GM12878 (cell line): ENCODE measurements at regions of chr11 and their contacts with region 1.

Region 1: GRCh38 chr11:96389720-96390487 is at the starts of genes CCDC82 and JRKL:
- DNase-seq: peak; percentile 78
- ATAC-seq: peak; percentile 94
- H3K4me3 ChIP-seq: peak within 1 kb of the TSS; percentile 90
- H3K27ac ChIP-seq: peak within 1 kb of the TSS; percentile 78
- H3K4me1 ChIP-seq: no peaks in the 10 kb centered on the region
- H3K27me3 ChIP-seq: no peaks in the 10 kb centered on the region
- CTCF ChIP-seq: no peak
- EP300 ChIP-seq: no peak
- POLR2A ChIP-seq: peak; percentile 92
- RAD21 ChIP-seq: no peak
- polyA plus RNA-seq, gene CCDC82: 24.5 to 24.7 TPM
- polyA plus RNA-seq, gene JRKL: 4.6 to 4.8 TPM

Region 2: GRCh38 chr11:95790123-95790932 is 599.6 kb before region 1 on chr11 and contains the start of gene CEP57:
- CTCF ChIA-PET with region 1: interaction called, 5 read pairs
- POLR2A ChIA-PET with region 1: interaction called, 11 read pairs
- RAD21 ChIA-PET with region 1: interaction called, 11 read pairs
- SMC1A ChIA-PET with region 1: interaction called, 14 read pairs
- in situ Hi-C with region 1: loop called (anchors 5 kb)
- intact Hi-C with region 1: loop called (anchors 1 kb)
- DNase-seq: peak; percentile 92
- ATAC-seq: peak; percentile 73
- H3K4me3 ChIP-seq: peak within 1 kb of the TSS; percentile 87
- H3K27ac ChIP-seq: peak within 1 kb of the TSS; percentile 90
- H3K4me1 ChIP-seq: 0 out of 2 replicates have a peak, but pooled peaks cover 3% of the 10 kb centered on the region
- H3K27me3 ChIP-seq: no peaks in the 10 kb centered on the region
- CTCF ChIP-seq: no peak
- EP300 ChIP-seq: 0 out of 4 replicates have a peak, but pooled peaks of 1 of the 2 experiments have one; percentile 40
- POLR2A ChIP-seq: peak; percentile 77
- RAD21 ChIP-seq: no peak
- polyA plus RNA-seq, gene CEP57: 19.4 to 25.8 TPM

Region 3: DNA sequence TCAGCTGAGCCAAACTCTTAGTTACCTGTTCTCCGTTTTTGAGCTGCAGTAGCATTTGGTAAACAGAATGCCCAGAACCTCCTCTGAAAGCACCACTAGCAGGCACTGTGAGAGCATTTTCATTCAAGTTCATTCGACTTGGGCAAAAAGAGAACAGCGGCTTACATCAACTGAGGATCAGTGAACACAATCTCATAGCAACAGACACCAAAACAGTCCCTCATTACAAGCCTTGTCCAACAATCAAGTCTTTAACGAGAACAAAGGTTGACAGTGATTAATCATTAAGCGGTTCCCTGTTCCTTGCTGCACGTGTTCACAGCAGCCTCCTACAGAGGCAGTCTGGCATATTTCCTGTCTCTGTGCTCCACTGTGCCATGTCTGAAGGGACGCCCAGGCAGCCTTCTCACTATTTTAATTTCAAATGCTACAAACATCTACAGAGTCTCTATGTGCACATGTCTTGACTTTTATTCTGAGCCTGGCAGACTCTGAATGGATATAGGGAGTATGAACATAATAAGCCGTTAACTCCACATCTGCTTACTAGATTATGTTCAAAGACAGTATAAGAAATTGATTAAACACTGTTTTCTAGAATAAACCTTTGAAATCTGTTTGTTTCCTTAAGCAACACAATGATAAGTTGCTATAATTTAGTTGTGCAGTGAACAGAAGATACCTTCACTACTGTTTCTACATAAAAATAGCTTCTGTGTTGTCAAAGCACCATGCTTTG is 377.6 kb before region 1 on chr11:
- CTCF ChIA-PET with region 1: interaction called, 15 read pairs
- POLR2A ChIA-PET with region 1: interaction called, 3 read pairs
- RAD21 ChIA-PET with region 1: interaction called, 18 read pairs
- SMC1A ChIA-PET with region 1: interaction called, 18 read pairs
- in situ Hi-C with region 1: loop called (anchors 5 kb)
- intact Hi-C with region 1: loop called (anchors 1 kb)
- DNase-seq: peak; percentile 96
- ATAC-seq: peak; percentile 93
- H3K4me3 ChIP-seq: no peak overlapping the region
- H3K27ac ChIP-seq: peak overlapping the region; percentile 59
- H3K4me1 ChIP-seq: peaks cover 32% of the 10 kb centered on the region
- H3K27me3 ChIP-seq: no peaks in the 10 kb centered on the region
- CTCF ChIP-seq: peak; percentile 78 to 91 (median 87)
- EP300 ChIP-seq: peak; percentile 76 to 86; a peak in 2 of 4 replicates
- POLR2A ChIP-seq: no peak
- RAD21 ChIP-seq: peak; percentile 84

Region 4: DNA sequence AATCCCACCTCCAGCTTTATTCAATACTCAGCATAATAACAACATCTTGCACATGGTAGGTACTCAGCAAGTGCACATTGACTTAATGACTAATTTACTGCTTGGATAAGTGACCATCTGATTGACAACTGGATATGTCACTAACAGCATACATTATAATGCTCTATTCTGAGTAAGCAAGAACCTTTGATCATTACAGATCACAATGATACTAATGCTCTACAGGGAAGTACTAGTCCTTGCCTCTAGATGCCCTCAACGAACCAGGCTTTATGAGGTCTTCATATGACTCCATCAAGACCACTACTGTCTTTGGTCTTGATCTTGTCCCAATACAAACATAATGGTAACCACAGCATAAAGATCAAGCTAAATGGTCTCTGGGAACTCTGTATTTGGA is 298.4 kb before region 1 on chr11:
- CTCF ChIA-PET with region 1: interaction called, 22 read pairs
- POLR2A ChIA-PET with region 1: no interaction called
- RAD21 ChIA-PET with region 1: interaction called, 10 read pairs
- SMC1A ChIA-PET with region 1: interaction called, 6 read pairs
- in situ Hi-C with region 1: no loop called
- intact Hi-C with region 1: loop called (anchors 5 kb)
- DNase-seq: no peak
- ATAC-seq: peak; percentile 83
- H3K4me3 ChIP-seq: no peak overlapping the region
- H3K27ac ChIP-seq: no peak overlapping the region
- H3K4me1 ChIP-seq: no peaks in the 10 kb centered on the region
- H3K27me3 ChIP-seq: no peaks in the 10 kb centered on the region
- CTCF ChIP-seq: peak; percentile 21 to 50 (median 40); a peak in 5 of 6 replicates
- EP300 ChIP-seq: no peak
- POLR2A ChIP-seq: no peak
- RAD21 ChIP-seq: peak; percentile 82

Region 5: DNA sequence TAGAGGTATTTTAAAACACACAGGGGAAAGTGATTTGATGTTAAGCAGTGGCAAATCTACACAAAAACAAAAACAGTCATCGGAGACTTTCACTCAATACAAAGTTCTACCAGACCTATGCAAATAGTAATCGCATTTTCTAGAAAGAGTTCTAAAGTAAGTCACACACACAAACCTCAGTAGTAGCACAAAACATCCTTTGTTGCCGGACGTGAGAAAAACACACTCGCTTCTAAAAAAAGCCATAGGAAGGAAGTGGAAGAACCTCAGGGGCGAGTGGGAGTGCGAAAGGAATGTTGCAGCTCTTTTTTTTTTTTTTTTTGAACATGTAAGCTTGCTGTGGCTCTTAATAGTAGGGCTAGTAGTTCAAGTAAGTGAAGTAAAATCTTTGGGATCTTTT is 135.8 kb before region 1 on chr11:
- CTCF ChIA-PET with region 1: interaction called, 4 read pairs
- POLR2A ChIA-PET with region 1: no interaction called
- RAD21 ChIA-PET with region 1: interaction called, 3 read pairs
- SMC1A ChIA-PET with region 1: interaction called, 5 read pairs
- in situ Hi-C with region 1: no loop called
- intact Hi-C with region 1: loop called (anchors 5 kb)
- DNase-seq: peak; percentile 91
- ATAC-seq: peak; percentile 58
- H3K4me3 ChIP-seq: peak overlapping the region; percentile 34
- H3K27ac ChIP-seq: peak overlapping the region; percentile 34
- H3K4me1 ChIP-seq: peaks cover 60% of the 10 kb centered on the region
- H3K27me3 ChIP-seq: no peaks in the 10 kb centered on the region
- CTCF ChIP-seq: no peak
- EP300 ChIP-seq: peak; percentile 19 to 62; a peak in 1 of 4 replicates
- POLR2A ChIP-seq: no peak
- RAD21 ChIP-seq: peak; percentile 23; the same call in 1 of the 2 replicates

Region 6: GRCh38 chr11:96424693-96425092 is 34.8 kb after region 1 on chr11:
- CTCF ChIA-PET with region 1: interaction called, 8 read pairs
- POLR2A ChIA-PET with region 1: no interaction called
- RAD21 ChIA-PET with region 1: interaction called, 11 read pairs
- SMC1A ChIA-PET with region 1: interaction called, 3 read pairs
- in situ Hi-C with region 1: no loop called
- intact Hi-C with region 1: no loop called
- DNase-seq: no peak
- ATAC-seq: no peak
- H3K4me3 ChIP-seq: no peak overlapping the region
- H3K27ac ChIP-seq: no peak overlapping the region
- H3K4me1 ChIP-seq: no peaks in the 10 kb centered on the region
- H3K27me3 ChIP-seq: no peaks in the 10 kb centered on the region
- CTCF ChIP-seq: no peak
- EP300 ChIP-seq: no peak
- POLR2A ChIP-seq: no peak
- RAD21 ChIP-seq: no peak